ENCODE measurements at regions of chr22 and their contacts with region 1.

Region 1: DNA sequence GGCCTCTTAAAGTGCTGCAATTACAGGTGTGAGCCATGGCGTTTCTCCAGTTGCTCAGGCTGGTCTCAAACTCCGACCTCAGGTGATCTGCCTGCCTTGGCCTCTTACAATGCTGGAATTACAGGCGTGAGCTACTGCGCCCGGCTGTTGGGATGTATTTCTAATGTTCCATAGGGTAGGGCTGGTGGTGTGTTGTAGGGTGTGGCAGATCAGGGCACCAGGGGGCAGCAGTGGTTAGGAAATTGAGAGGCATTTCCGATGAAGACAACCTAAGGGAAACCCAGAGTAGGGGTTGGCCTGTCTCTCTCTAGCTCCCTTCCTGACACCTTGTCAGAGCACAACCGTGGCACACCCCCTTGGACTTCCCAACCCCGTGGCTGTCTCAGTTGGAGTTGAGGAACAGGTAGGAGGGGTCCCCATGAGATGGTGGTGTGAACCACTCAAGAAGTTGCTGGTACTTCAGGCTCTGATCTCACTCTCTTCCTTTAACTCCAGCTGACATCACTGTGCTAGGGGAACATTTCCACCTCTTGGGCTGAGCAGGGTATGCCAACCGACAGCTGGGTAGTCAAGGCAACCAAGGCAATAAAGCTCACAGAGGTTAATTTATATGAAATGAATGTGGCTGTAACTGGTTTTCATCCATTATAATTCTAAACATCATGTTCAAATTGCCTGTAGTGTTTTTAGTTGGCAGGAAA is 33.0 kb downstream of the YWHAH start:
- DNase-seq: peak; percentile 51 to 81
- H3K4me3 ChIP-seq: no peak overlapping the region
- H3K27ac ChIP-seq: no peak overlapping the region
- H3K4me1 ChIP-seq: no peaks in the 10 kb centered on the region
- H3K27me3 ChIP-seq: no peaks in the 10 kb centered on the region
- CTCF ChIP-seq: peak; percentile 92

Region 2: GRCh38 chr22:31630331-31631329 is 346.7 kb before region 1 on chr22:
- CTCF ChIA-PET with region 1: interaction called, 13 read pairs
- POLR2A ChIA-PET with region 1: no interaction called
- intact Hi-C with region 1: no loop called
- DNase-seq: peak; percentile 78 to 95
- H3K4me3 ChIP-seq: peak overlapping the region; percentile 84
- H3K27ac ChIP-seq: peak overlapping the region; percentile 51
- H3K4me1 ChIP-seq: peaks cover 39% of the 10 kb centered on the region
- H3K27me3 ChIP-seq: no peaks in the 10 kb centered on the region
- CTCF ChIP-seq: no peak; the same call in 1 of the 2 replicates

Region 3: GRCh38 chr22:31753634-31754501 is 223.4 kb before region 1 on chr22 and contains the start of gene DEPDC5:
- CTCF ChIA-PET with region 1: no interaction called
- POLR2A ChIA-PET with region 1: no interaction called
- intact Hi-C with region 1: no loop called
- DNase-seq: peak; percentile 94 to 99
- H3K4me3 ChIP-seq: peak within 1 kb of the TSS; percentile 95
- H3K27ac ChIP-seq: peak within 1 kb of the TSS; percentile 94
- H3K4me1 ChIP-seq: peaks cover 39% of the 10 kb centered on the region
- H3K27me3 ChIP-seq: no peaks in the 10 kb centered on the region
- CTCF ChIP-seq: no peak
- total RNA-seq, gene DEPDC5: 25.9 and 28.1 TPM in 2 replicates

Region 4: GRCh38 chr22:31995046-31995445 is 17.8 kb after region 1 on chr22:
- CTCF ChIA-PET with region 1: no interaction called
- POLR2A ChIA-PET with region 1: no interaction called
- intact Hi-C with region 1: no loop called
- DNase-seq: no peak
- H3K4me3 ChIP-seq: no peak overlapping the region
- H3K27ac ChIP-seq: no peak overlapping the region
- H3K4me1 ChIP-seq: peaks cover under 1% of the 10 kb centered on the region; the same call in 1 of the 2 replicates
- H3K27me3 ChIP-seq: peaks cover 11% of the 10 kb centered on the region; the same call in 1 of the 2 replicates
- CTCF ChIP-seq: peak; percentile 38; the same call in 1 of the 2 replicates

Region 5: DNA sequence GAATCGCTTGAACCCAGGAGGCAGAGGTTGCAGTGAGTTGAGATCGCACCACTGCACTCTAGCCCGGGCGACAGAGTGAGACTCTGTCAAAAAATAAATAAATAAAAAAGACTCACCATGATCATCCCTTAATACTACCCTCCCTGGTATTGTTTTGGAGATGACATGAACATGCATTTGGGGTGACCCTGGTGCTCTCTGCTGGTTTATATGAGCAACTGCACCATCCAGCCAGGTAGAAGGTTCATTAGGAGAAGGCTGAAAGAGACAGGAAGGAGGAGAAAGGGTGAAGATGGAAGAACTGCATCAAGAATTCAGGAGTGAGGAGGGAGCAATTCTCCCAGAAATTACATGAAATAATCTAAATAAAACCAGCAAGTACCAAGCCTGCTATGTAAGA is 103.6 kb after region 1 on chr22:
- CTCF ChIA-PET with region 1: interaction called, 7 read pairs
- POLR2A ChIA-PET with region 1: no interaction called
- intact Hi-C with region 1: loop called (anchors 1 kb)
- DNase-seq: peak; percentile 20 to 54
- H3K4me3 ChIP-seq: no peak overlapping the region
- H3K27ac ChIP-seq: no peak overlapping the region
- H3K4me1 ChIP-seq: peaks cover 11% of the 10 kb centered on the region
- H3K27me3 ChIP-seq: no peaks in the 10 kb centered on the region; the same call in 1 of the 2 replicates
- CTCF ChIP-seq: peak; percentile 94

Region 6: GRCh38 chr22:32202539-32203180 is 225.4 kb after region 1 on chr22:
- CTCF ChIA-PET with region 1: interaction called, 3 read pairs
- POLR2A ChIA-PET with region 1: no interaction called
- intact Hi-C with region 1: loop called (anchors 1 kb)
- DNase-seq: peak in 1 of 2 experiments; percentile 24
- H3K4me3 ChIP-seq: no peak overlapping the region
- H3K27ac ChIP-seq: no peak overlapping the region
- H3K4me1 ChIP-seq: no peaks in the 10 kb centered on the region
- H3K27me3 ChIP-seq: peaks cover 21% of the 10 kb centered on the region
- CTCF ChIP-seq: peak; percentile 67

Region 7: DNA sequence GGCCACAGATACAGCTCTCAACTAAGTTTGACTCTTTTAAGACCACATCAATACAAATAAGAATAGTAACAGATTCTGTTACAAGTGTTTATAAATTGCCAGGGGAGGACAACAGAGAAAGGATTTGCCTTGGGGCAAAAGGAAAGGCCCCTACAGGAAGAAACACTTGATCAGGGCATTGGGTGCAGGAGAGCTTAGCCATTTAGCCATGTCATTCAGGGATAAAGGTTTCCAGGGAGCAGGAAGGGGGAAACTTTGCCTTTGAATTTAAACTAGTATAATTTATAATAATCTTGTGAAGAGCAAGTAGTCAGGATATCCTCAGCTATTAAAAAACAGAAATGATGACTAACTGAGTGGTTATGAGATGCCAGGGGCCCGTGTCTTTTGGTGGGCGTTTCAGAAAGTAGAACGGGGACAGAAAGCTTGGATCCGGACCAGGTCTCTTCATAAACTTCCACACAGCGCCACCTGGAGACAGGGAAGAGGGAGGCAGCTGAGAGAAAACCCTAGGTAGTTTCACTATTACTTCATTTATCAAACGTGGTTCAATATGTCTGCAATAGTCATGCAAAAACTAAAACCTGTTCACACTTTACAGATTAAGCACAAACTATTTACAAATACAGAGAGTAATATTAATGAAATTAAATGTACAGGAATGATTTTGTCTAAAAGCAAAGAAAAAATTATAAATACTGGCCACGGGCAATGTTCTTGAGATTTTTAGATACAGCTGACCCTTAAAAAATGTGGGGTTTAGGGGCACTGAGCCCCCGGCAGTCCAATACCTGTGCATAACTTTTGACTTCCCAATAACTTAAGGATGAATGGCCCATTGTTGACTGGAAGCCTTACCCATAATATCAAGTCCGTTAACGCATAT is 288.8 kb after region 1 on chr22:
- CTCF ChIA-PET with region 1: interaction called, 4 read pairs
- POLR2A ChIA-PET with region 1: no interaction called
- intact Hi-C with region 1: loop called (anchors 1 kb)
- DNase-seq: peak; percentile 29 to 44
- H3K4me3 ChIP-seq: no peak overlapping the region
- H3K27ac ChIP-seq: no peak overlapping the region
- H3K4me1 ChIP-seq: no peaks in the 10 kb centered on the region
- H3K27me3 ChIP-seq: peaks cover 62% of the 10 kb centered on the region
- CTCF ChIP-seq: peak; percentile 90

Region 8: GRCh38 chr22:33000342-33001280 is 1023.3 kb after region 1 on chr22:
- CTCF ChIA-PET with region 1: no interaction called
- POLR2A ChIA-PET with region 1: no interaction called
- intact Hi-C with region 1: loop called (anchors 5 kb)
- DNase-seq: peak in 1 of 2 experiments; percentile 60
- H3K4me3 ChIP-seq: no peak overlapping the region
- H3K27ac ChIP-seq: no peak overlapping the region
- H3K4me1 ChIP-seq: peaks cover 27% of the 10 kb centered on the region
- H3K27me3 ChIP-seq: no peaks in the 10 kb centered on the region
- CTCF ChIP-seq: peak; percentile 97

Region 9: DNA sequence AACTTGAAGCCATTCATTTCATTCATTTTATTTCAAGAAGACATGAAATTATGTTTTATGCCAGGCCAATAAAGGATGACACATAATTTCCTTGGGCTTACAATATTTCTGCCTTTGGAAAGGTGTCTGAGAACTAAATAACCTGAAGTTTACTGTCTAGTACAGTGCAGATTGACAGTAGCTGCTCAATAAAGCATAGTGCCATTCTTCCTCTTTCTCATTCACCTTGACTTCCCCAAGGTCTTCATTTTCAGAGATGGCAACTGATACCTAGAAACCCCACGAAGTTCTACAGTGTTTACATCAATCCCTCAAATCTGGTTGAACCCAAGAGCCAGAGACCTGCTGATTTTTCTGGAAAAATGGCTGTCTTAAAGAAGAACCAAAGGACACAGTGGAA is 1225.2 kb after region 1 on chr22:
- CTCF ChIA-PET with region 1: no interaction called
- POLR2A ChIA-PET with region 1: no interaction called
- intact Hi-C with region 1: loop called (anchors 2 kb)
- DNase-seq: no peak
- H3K4me3 ChIP-seq: no peak overlapping the region
- H3K27ac ChIP-seq: no peak overlapping the region
- H3K4me1 ChIP-seq: no peaks in the 10 kb centered on the region
- H3K27me3 ChIP-seq: peaks cover 78% of the 10 kb centered on the region
- CTCF ChIP-seq: no peak